K562 (cell line): ENCODE measurements at regions of chr10 and their contacts with region 1.

Region 1: GRCh38 chr10:86899670-86900276 is 57.6 kb downstream of the MMRN2 start:
- DNase-seq: peak; percentile 28 to 73 (median 40)
- ATAC-seq: peak; percentile 88
- H3K4me3 ChIP-seq: no peak overlapping the region
- H3K27ac ChIP-seq: no peak overlapping the region
- H3K4me1 ChIP-seq: no peaks in the 10 kb centered on the region
- H3K27me3 ChIP-seq: no peaks in the 10 kb centered on the region
- CTCF ChIP-seq: peak; percentile 60 to 71 (median 69); a peak in 4 of 6 replicates
- EP300 ChIP-seq: no peak
- POLR2A ChIP-seq: no peak
- RAD21 ChIP-seq: peak; percentile 83 to 85

Region 2: GRCh38 chr10:86688398-86688921 is 211.3 kb before region 1 on chr10:
- CTCF ChIA-PET with region 1: interaction called, 6 read pairs
- POLR2A ChIA-PET with region 1: no interaction called
- in situ Hi-C with region 1: no loop called
- intact Hi-C with region 1: loop called (anchors 2 kb)
- DNase-seq: peak; percentile 67 to 71 (median 68)
- ATAC-seq: peak; percentile 87
- H3K4me3 ChIP-seq: no peak overlapping the region
- H3K27ac ChIP-seq: no peak overlapping the region
- H3K4me1 ChIP-seq: peaks cover 0 to 17% of the 10 kb centered on the region in 2 experiments; a peak in 2 of 5 replicates
- H3K27me3 ChIP-seq: peaks cover 7 to 29% of the 10 kb centered on the region in 2 experiments; a peak in 4 of 5 replicates
- CTCF ChIP-seq: peak; percentile 78 to 83 (median 83)
- EP300 ChIP-seq: no peak
- POLR2A ChIP-seq: no peak
- RAD21 ChIP-seq: peak; percentile 72 to 80

Region 3: DNA sequence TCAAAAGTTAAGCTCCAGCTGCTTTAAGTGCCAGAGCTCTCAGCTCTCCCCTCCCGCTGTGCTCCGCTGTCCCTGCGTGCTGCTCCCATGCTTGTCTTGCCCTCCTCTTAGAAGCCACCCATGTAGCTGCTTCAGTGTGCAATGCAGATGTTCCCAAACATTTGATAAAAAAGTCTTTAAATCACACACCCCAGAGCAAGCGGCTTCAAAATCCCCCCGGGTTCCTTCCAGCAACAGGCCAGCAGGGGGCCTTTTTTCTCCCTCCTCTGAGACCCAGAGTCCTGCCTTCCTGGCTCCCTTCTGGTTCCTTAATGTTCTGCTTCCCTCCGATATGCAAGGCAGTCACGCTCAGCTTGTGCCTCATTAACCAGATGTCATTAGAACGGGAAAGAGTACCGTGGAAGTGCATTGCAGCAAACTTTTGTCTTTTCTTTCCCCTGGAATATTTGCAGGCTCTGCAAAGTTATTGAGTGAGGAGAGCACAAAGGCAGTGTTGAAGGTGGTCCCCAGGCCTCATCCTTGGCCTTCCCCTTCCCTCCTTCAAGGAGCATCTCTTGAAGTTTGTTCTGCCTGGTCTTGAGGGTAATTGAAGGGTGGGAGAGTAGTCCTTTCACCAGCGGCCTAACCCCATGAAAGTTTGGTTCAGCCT is 205.9 kb before region 1 on chr10:
- CTCF ChIA-PET with region 1: interaction called, 6 read pairs
- POLR2A ChIA-PET with region 1: no interaction called
- in situ Hi-C with region 1: no loop called
- intact Hi-C with region 1: loop called (anchors 1 kb)
- DNase-seq: peak; percentile 59 to 66 (median 62)
- ATAC-seq: peak; percentile 87
- H3K4me3 ChIP-seq: no peak overlapping the region
- H3K27ac ChIP-seq: no peak overlapping the region
- H3K4me1 ChIP-seq: peaks cover 0 to 6% of the 10 kb centered on the region in 2 experiments; a peak in 1 of 5 replicates
- H3K27me3 ChIP-seq: peaks cover 0 to 5% of the 10 kb centered on the region in 2 experiments; a peak in 1 of 5 replicates
- CTCF ChIP-seq: peak; percentile 68 to 76 (median 76)
- EP300 ChIP-seq: no peak
- POLR2A ChIP-seq: no peak
- RAD21 ChIP-seq: peak; percentile 52 to 64

Region 4: GRCh38 chr10:86710987-86711512 is 188.7 kb before region 1 on chr10:
- CTCF ChIA-PET with region 1: interaction called, 20 read pairs
- POLR2A ChIA-PET with region 1: no interaction called
- in situ Hi-C with region 1: loop called (anchors 5 kb)
- intact Hi-C with region 1: loop called (anchors 1 kb)
- DNase-seq: peak; percentile 86 to 88 (median 86)
- ATAC-seq: peak; percentile 97
- H3K4me3 ChIP-seq: peak overlapping the region; percentile 60
- H3K27ac ChIP-seq: peak overlapping the region; percentile 90
- H3K4me1 ChIP-seq: peaks cover 0 to 32% of the 10 kb centered on the region in 2 experiments; a peak in 4 of 5 replicates
- H3K27me3 ChIP-seq: no peaks in the 10 kb centered on the region
- CTCF ChIP-seq: peak; percentile 76 to 98 (median 89)
- EP300 ChIP-seq: no peak
- POLR2A ChIP-seq: peak; percentile 72
- RAD21 ChIP-seq: peak; percentile 90 to 91